Activated T-helper 2 cell treated with anti-CD3 and anti-CD28 coated beads, Interferon-gamma antibody, Interleukin-2, Interleukin-4, amounts not matched to agents 10 μg/mL and 5 μg/mL and 100 μg/mL, durations not matched to agents 14 hours and 24 hours and 36 hours (primary cell): ENCODE measurements at regions of chr17 and their contacts with region 1.

Region 1: GRCh38 chr17:41918314-41919164 is at the start of gene ACLY:
- DNase-seq: peak; percentile 98
- H3K4me3 Mint-ChIP-seq: peak within 1 kb of the TSS; percentile 95
- H3K27ac Mint-ChIP-seq: peak within 1 kb of the TSS; percentile 89
- H3K4me1 Mint-ChIP-seq: peaks cover 36% of the 10 kb centered on the region
- H3K27me3 Mint-ChIP-seq: no peaks in the 10 kb centered on the region
- total RNA-seq, gene ACLY: 223 and 232 TPM in 2 replicates

Region 2: GRCh38 chr17:41930009-41930832 is 11.7 kb after region 1 on chr17 and contains the start of gene ODAD4:
- intact Hi-C with region 1: loop called (anchors 1 kb)
- DNase-seq: peak; percentile 96
- H3K4me3 Mint-ChIP-seq: peak within 1 kb of the TSS; percentile 95
- H3K27ac Mint-ChIP-seq: peak within 1 kb of the TSS; percentile 95
- H3K4me1 Mint-ChIP-seq: peaks cover 42% of the 10 kb centered on the region
- H3K27me3 Mint-ChIP-seq: no peaks in the 10 kb centered on the region
- total RNA-seq, gene ODAD4: 0.50 and 0.85 TPM in 2 replicates